IMR-90 (cell line): ENCODE measurements at regions of chr4 and their contacts with region 1.

Region 1: DNA sequence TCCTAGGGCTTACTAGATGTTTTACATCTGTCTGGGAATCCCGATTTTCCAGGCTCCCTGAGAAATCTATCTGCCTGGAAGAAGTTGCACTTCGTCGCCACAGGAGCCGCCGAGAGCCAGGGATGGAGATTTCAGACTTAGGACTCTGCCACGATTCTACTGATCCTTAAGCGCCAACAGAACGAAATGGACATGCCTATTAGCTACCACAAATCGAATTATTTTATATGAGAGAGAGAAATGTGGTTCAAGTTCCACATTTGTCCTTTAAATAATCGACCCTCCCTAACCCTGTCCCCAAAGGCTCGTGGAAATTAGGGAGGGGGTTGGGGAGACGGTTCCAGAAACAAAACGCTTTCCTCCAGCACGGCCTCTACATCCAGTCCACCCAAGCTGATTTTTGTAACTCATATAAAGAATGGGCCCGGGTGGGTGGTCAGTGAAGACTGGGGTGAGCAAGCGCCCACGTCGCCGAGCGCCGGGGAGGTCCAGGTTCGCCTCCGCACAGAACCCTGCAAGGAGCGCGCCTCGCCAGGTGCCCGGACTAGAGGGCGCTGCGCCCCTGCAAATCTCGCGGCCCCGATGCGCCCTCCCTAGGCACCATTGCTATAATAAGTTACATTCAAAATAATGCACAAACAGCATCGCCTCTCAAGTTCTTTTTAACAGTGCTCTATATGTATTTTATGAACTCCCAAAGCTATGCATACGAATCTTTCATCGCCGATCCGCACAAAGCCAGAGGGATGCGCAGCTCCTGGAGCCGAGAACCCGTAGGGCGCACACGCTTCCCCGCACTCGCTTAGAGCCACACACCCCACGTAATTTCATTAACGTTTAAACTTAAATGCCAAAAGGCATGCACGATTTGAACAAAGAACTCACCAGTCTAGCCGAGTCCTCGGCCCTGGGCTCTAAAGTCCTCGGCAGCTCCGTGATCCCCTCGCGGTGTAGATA is 2.1 kb upstream of the FAT1 start:
- DNase-seq: peak; percentile 88
- ATAC-seq: peak; percentile 62
- H3K4me3 ChIP-seq: peak overlapping the region; percentile 89
- H3K27ac ChIP-seq: peak overlapping the region; percentile 97
- H3K4me1 ChIP-seq: peaks cover 10% of the 10 kb centered on the region
- H3K27me3 ChIP-seq: no peaks in the 10 kb centered on the region
- CTCF ChIP-seq: peak; percentile 91
- POLR2A ChIP-seq: peak; percentile 61; the same call in 1 of the 2 replicates
- RAD21 ChIP-seq: peak; percentile 90

Region 2: GRCh38 chr4:186621959-186622553 is 103.7 kb before region 1 on chr4:
- CTCF ChIA-PET with region 1: no interaction called
- POLR2A ChIA-PET with region 1: interaction called, 3 read pairs
- dilution Hi-C with region 1: no loop called
- in situ Hi-C with region 1: no loop called
- intact Hi-C with region 1: loop called (anchors 1 kb)
- DNase-seq: peak; percentile 95
- ATAC-seq: peak; percentile 75
- H3K4me3 ChIP-seq: no peak overlapping the region
- H3K27ac ChIP-seq: peak overlapping the region; percentile 66
- H3K4me1 ChIP-seq: peaks cover 16% of the 10 kb centered on the region
- H3K27me3 ChIP-seq: no peaks in the 10 kb centered on the region
- CTCF ChIP-seq: peak; percentile 59
- POLR2A ChIP-seq: no peak
- RAD21 ChIP-seq: peak; percentile 44

Region 3: GRCh38 chr4:186792728-186793366 is 67.1 kb after region 1 on chr4:
- CTCF ChIA-PET with region 1: no interaction called
- POLR2A ChIA-PET with region 1: no interaction called
- dilution Hi-C with region 1: no loop called
- in situ Hi-C with region 1: no loop called
- intact Hi-C with region 1: loop called (anchors 2 kb)
- DNase-seq: peak; percentile 68
- ATAC-seq: peak; percentile 47
- H3K4me3 ChIP-seq: no peak overlapping the region
- H3K27ac ChIP-seq: no peak overlapping the region
- H3K4me1 ChIP-seq: peaks cover 12% of the 10 kb centered on the region
- H3K27me3 ChIP-seq: no peaks in the 10 kb centered on the region
- CTCF ChIP-seq: no peak
- POLR2A ChIP-seq: no peak
- RAD21 ChIP-seq: no peak

Region 4: DNA sequence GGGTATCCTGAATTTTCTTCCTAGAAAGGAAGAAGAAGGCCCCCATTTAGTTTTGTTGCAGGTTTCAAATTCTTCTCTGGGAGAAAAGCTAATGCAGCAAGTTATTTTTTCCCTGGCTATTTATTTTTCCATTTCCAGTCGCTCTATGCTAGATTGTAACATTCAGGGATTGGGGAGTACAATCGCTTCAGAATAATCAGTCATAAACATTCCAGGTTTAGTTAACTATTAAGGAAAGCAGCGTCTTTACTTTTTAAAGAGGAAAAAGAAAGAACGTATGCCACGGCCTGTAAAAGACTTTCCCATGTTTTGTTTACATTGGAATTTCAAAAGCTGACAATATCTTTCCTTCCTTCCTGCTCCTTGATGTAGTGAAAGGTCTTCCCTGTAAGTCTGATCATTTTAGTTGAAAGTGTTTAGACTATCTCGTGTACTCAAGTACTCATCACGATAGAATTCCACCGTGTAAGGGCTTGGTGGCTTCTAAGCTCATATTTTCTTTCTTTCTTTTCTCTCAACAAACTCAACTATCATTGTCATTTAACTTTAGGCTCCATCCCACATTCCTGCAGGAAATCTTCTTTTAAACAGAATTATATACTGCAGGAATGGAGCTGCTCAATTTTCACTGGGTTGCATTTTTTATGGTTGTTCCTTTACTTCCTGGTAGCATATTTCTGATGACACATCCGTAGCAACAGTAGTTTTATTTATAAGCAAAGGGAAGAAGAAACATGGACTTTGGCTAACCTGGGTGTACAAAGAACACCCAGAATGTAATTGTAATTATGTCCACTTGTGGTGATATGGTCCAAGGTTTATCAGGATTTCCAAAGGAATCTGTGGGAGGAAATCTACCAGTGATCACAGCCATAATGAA is 211.0 kb after region 1 on chr4:
- CTCF ChIA-PET with region 1: interaction called, 3 read pairs
- POLR2A ChIA-PET with region 1: no interaction called
- dilution Hi-C with region 1: no loop called
- in situ Hi-C with region 1: loop called (anchors 25 kb)
- intact Hi-C with region 1: loop called (anchors 1 kb)
- DNase-seq: peak; percentile 88
- ATAC-seq: peak; percentile 76
- H3K4me3 ChIP-seq: peak overlapping the region; percentile 43; the same call in 1 of the 2 replicates
- H3K27ac ChIP-seq: peak overlapping the region; percentile 60; the same call in 1 of the 2 replicates
- H3K4me1 ChIP-seq: peaks cover 15% of the 10 kb centered on the region
- H3K27me3 ChIP-seq: no peaks in the 10 kb centered on the region
- CTCF ChIP-seq: peak; percentile 47
- POLR2A ChIP-seq: no peak
- RAD21 ChIP-seq: peak; percentile 65

Region 5: GRCh38 chr4:187172340-187172761 is 446.6 kb after region 1 on chr4:
- CTCF ChIA-PET with region 1: no interaction called
- POLR2A ChIA-PET with region 1: no interaction called
- dilution Hi-C with region 1: no loop called
- in situ Hi-C with region 1: no loop called
- intact Hi-C with region 1: loop called (anchors 10 kb)
- DNase-seq: no peak
- ATAC-seq: no peak
- H3K4me3 ChIP-seq: no peak overlapping the region
- H3K27ac ChIP-seq: no peak overlapping the region
- H3K4me1 ChIP-seq: peaks cover 2% of the 10 kb centered on the region; the same call in 1 of the 2 replicates
- H3K27me3 ChIP-seq: no peaks in the 10 kb centered on the region
- CTCF ChIP-seq: no peak
- POLR2A ChIP-seq: no peak
- RAD21 ChIP-seq: no peak

Region 6: DNA sequence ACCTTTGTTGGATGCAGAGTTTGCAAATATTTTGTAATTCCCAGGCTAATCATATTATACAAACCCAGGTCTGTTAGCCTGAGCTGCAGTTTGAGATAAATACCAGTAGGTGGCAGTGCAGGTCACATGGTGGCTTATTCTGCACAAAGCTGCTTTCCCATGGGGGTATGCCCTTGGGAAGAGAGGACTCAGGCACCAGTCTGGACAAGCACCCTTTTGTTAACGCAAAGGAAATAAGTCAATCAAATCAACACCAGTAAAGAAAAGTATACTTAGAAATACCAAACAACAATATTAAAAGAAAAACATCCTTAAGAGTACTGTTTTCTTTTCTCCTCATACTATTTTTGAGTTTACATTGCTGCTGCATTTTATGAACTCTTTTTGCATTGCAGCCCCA is 880.8 kb after region 1 on chr4:
- CTCF ChIA-PET with region 1: no interaction called
- POLR2A ChIA-PET with region 1: no interaction called
- dilution Hi-C with region 1: no loop called
- in situ Hi-C with region 1: loop called (anchors 10 kb)
- intact Hi-C with region 1: loop called (anchors 1 kb)
- DNase-seq: peak; percentile 69
- ATAC-seq: peak; percentile 64
- H3K4me3 ChIP-seq: no peak overlapping the region
- H3K27ac ChIP-seq: peak overlapping the region; percentile 55; the same call in 1 of the 2 replicates
- H3K4me1 ChIP-seq: peaks cover 11% of the 10 kb centered on the region
- H3K27me3 ChIP-seq: no peaks in the 10 kb centered on the region
- CTCF ChIP-seq: peak; percentile 86
- POLR2A ChIP-seq: no peak
- RAD21 ChIP-seq: peak; percentile 90